WTC11 (cell line): ENCODE measurements at regions of chr11 and their contacts with region 1.

Region 1: DNA sequence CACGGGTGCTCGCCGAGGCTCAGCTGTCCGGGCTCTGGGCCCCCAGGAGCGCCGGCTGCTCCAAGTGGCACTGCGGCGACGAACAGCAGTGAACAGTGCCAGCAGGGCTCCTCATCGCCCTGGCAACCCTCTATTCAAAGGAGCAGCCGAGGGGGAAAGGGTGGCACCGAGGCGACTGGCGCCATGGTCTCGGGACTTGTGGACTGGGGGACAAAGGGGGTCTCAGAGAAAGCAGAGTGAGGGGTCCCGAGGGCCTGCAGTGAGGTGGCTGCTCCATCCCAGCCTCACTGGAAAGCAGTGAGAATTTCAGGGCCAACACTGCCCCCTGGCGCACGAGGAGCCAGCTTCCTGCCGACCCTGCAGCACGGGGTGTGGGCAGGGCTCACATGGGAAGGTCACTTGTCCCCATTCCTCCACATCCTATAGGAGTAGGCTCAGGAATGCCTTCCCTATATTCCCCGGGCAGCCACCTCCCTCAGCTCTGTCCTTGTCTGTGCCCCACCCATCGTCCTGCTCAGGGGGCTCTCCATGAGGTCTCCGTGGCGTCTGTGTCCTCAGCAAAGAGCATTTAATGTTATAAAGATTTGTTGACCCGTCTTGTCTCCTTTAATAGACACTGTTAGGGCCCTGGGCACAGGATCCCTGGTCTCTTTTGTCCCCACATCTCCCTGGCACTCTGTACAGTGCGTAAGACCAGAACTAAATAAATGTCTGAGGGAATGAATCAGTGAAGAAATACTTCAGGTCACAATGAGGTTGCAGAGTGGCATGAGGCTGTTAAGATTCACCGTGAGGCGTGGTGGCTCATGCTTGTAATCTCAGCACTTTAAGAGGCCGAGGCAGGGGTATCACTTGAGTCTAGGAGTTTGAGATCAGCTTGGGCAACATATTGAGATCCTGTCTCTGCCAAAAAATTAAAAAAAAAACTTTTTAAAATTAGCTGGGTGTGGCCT is 26.4 kb downstream of the LRFN4 start:
- DNase-seq: peak; percentile 91
- ATAC-seq: peak; percentile 91
- H3K4me3 Mint-ChIP-seq: no peak overlapping the region
- H3K27ac Mint-ChIP-seq: peak overlapping the region; percentile 91
- H3K4me1 Mint-ChIP-seq: peaks cover 41% of the 10 kb centered on the region
- H3K27me3 Mint-ChIP-seq: no peaks in the 10 kb centered on the region
- CTCF ChIP-seq: peak; percentile 54

Region 2: GRCh38 chr11:66126808-66127555 is 756.3 kb before region 1 on chr11:
- CTCF ChIA-PET with region 1: no interaction called
- POLR2A ChIA-PET with region 1: no interaction called
- DNase-seq: no peak
- ATAC-seq: peak; percentile 77
- H3K4me3 Mint-ChIP-seq: no peak overlapping the region
- H3K27ac Mint-ChIP-seq: peak overlapping the region; percentile 88
- H3K4me1 Mint-ChIP-seq: peaks cover 32% of the 10 kb centered on the region
- H3K27me3 Mint-ChIP-seq: no peaks in the 10 kb centered on the region
- CTCF ChIP-seq: no peak

Region 3: DNA sequence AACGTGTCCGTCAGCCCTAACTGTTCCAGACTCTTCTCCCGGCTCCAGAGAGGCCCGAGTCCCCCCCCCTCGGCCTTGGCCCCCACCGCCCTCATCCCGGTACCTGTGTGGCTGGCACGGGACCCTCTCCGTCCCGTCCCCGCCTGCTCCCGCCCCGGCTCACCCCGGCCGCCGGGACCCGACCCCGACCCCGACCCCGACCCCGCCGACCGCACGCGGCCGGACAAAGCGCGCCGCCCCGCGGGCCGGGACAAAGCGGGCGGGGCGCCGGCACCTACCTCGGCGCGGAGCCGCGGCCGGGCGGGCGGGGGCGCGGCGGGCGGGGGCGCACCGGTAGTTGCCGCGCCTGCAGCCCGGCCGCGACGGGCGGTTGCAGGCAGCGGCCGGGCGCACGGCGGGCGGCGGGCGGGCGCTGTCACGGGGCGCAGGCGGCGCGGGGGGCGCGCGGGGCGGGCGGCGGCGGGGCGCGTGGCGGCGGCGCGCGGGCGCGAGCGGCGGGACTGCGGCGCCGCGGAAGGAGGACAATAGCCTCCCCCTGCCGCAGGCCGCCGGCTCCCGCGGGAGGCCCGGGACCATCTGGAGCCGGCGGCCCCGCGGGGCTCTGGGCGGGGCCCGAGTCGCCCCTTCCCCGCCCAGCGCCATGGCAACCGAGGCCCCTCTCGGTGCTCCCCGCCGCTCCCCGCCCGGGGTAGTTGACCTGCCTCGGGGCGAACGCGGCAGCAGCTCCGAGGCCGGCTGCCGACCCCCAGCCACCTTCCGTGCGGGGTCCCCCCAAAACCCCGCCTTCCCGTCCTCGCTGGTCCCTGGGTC is 155.2 kb before region 1 on chr11:
- CTCF ChIA-PET with region 1: no interaction called
- POLR2A ChIA-PET with region 1: no interaction called
- DNase-seq: peak; percentile 45
- ATAC-seq: peak; percentile 47
- H3K4me3 Mint-ChIP-seq: peak overlapping the region; percentile 86
- H3K27ac Mint-ChIP-seq: no peak overlapping the region
- H3K4me1 Mint-ChIP-seq: peaks cover 27% of the 10 kb centered on the region
- H3K27me3 Mint-ChIP-seq: peaks cover 65% of the 10 kb centered on the region
- CTCF ChIP-seq: no peak

Region 4: DNA sequence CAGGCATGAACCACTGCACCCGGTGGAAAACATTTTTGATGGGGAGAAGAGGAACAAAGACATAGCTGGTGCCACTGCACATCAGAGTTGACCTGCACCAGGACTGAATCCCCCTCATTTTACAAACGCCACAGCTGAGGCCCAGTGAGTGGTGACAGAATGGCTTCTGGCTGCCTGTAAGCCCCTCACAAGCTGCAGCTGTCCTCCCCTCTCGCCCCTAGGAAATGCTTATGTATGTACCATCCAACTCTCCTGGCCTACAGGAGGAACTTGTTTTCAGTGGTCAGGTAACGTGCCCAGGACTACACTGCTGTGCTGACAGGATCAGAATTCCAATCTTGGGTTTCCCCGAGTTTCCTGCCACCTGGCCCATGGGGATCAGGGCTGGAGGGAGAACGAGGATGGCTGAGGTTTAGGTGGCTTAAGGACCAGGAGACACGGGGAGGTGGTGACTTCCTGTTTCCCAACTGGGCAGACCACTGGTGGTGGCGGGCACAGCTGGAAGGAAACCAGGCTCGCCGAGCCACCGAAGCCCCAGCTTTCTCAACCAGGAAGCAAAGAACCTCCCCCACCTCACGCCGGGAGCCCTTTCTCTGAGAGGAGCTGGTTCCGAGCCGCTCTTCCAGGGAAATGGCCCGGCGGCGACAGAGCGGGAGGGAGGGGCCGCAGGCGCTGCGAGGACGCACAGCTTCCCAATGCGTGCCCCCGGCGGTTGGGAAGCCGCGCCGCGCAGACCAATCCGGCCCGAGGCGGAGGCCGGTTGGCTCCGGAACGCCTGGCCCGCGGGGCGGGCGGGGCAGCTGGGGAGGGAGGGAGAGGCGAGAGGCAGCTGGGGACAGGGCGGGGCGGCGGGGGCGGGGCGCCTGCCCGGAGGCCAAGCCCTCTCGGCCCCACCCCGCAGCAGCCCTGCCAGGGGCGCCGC is 27.5 kb before region 1 on chr11:
- CTCF ChIA-PET with region 1: interaction called, 39 read pairs
- POLR2A ChIA-PET with region 1: interaction called, 5 read pairs
- DNase-seq: peak; percentile 97
- ATAC-seq: peak; percentile 74
- H3K4me3 Mint-ChIP-seq: peak overlapping the region; percentile 87
- H3K27ac Mint-ChIP-seq: peak overlapping the region; percentile 99
- H3K4me1 Mint-ChIP-seq: peaks cover 17% of the 10 kb centered on the region
- H3K27me3 Mint-ChIP-seq: no peaks in the 10 kb centered on the region
- CTCF ChIP-seq: no peak

Region 5: GRCh38 chr11:66868726-66869566 is 14.3 kb before region 1 on chr11:
- CTCF ChIA-PET with region 1: interaction called, 18 read pairs
- POLR2A ChIA-PET with region 1: no interaction called
- DNase-seq: peak; percentile 93
- ATAC-seq: peak; percentile 91
- H3K4me3 Mint-ChIP-seq: no peak overlapping the region
- H3K27ac Mint-ChIP-seq: peak overlapping the region; percentile 83
- H3K4me1 Mint-ChIP-seq: peaks cover 12% of the 10 kb centered on the region
- H3K27me3 Mint-ChIP-seq: no peaks in the 10 kb centered on the region
- CTCF ChIP-seq: peak; percentile 25; the same call in 1 of the 2 replicates

Region 6: DNA sequence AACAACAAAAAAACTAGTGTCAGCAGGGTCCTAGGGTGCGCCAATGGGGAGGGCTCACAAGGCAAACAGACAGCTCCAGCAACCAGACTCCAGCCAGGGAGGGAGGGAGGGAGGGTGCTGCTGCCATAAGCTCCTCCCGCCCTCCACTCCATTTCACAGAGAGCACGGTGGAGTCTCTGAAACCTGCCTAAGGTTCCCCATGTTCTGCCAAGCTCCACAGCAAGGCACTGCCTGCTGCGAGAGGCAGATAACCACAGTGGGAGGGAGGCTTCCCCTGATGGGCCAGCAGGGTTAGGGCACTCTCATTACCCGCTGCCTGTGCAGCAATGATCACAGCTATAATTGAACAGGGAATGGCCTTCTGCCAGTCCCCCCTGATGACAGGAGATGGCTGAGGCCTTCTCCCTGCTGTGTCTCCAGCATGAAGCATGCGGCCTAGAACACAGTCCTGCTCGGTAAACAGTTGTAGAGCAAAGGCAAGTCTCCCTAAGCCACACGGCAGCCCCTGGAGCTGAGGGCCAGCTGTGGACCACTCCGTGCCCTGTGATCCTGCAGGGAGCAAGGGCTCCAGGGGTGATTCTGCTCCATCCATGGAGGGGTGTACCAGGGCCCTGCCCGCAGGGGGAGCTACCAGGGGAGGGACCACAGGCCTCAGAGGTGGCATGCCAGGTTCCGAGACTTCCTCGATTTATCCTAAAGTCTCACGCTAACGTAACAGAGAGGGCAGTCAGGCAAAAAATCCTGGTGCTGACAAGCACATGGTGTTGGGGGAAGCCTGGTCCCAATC is 31.9 kb after region 1 on chr11:
- CTCF ChIA-PET with region 1: interaction called, 16 read pairs
- POLR2A ChIA-PET with region 1: interaction called, 3 read pairs
- DNase-seq: no peak
- ATAC-seq: peak; percentile 78
- H3K4me3 Mint-ChIP-seq: no peak overlapping the region
- H3K27ac Mint-ChIP-seq: no peak overlapping the region
- H3K4me1 Mint-ChIP-seq: peaks cover 40% of the 10 kb centered on the region
- H3K27me3 Mint-ChIP-seq: no peaks in the 10 kb centered on the region; the same call in 1 of the 2 replicates
- CTCF ChIP-seq: no peak

Region 7: GRCh38 chr11:66958232-66958955 is 75.1 kb after region 1 on chr11 and contains the start of gene PC:
- CTCF ChIA-PET with region 1: interaction called, 15 read pairs
- POLR2A ChIA-PET with region 1: no interaction called
- DNase-seq: peak; percentile 100
- ATAC-seq: peak; percentile 96
- H3K4me3 Mint-ChIP-seq: peak within 1 kb of the TSS; percentile 87
- H3K27ac Mint-ChIP-seq: peak within 1 kb of the TSS; percentile 99
- H3K4me1 Mint-ChIP-seq: peaks cover 26% of the 10 kb centered on the region
- H3K27me3 Mint-ChIP-seq: peaks cover 17% of the 10 kb centered on the region
- CTCF ChIP-seq: no peak
- total RNA-seq, gene PC: 22.1 to 27.2 TPM (median 25.6 TPM) in 3 replicates

Region 8: DNA sequence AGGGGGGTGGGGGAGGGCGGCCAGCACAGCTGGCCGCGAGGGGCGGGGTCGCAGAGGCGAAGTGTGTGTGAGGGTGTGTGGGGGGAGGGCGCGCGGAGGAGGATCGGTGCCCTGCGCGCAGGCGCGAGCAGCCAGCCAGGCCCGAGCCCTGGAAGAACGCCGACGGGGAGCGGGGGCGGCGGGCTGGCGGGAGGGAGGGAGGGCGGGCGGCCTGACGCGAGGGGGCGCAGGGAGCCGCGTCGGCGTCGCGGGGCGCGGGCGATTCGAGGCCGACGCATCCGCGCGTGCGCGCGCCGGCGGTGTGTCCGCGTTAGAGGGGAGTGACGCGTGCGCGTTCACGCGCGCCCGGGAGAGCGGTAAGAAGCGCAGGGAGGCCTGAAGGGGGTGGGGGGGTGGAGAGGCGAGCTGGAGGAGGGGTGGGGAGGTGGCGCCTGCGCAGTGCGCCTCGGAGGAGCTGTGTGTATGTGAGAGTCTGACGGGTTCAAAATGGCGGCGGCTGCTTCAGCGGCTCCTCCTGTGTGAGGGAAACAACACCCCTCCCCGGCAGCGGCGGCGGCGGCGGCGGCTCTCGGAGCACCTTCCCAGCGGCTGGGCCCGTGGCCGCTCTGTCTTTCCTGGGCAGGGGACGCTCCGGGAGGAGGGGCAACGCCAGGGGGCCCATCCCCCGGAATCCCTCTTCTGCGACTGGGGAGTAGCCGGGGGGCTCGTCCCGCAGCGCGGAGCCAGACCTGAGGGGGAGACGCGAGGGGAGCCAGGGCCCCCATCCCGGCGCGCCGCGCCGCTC is 235.7 kb after region 1 on chr11 and contains the start of gene KDM2A:
- CTCF ChIA-PET with region 1: no interaction called
- POLR2A ChIA-PET with region 1: no interaction called
- DNase-seq: peak; percentile 98
- ATAC-seq: peak; percentile 83
- H3K4me3 Mint-ChIP-seq: peak within 1 kb of the TSS; percentile 94
- H3K27ac Mint-ChIP-seq: peak within 1 kb of the TSS; percentile 96
- H3K4me1 Mint-ChIP-seq: peaks cover 32% of the 10 kb centered on the region
- H3K27me3 Mint-ChIP-seq: peaks cover 4% of the 10 kb centered on the region; the same call in 1 of the 2 replicates
- CTCF ChIP-seq: no peak
- total RNA-seq, gene KDM2A: 54.0 to 58.0 TPM (median 54.3 TPM) in 3 replicates

Region 9: GRCh38 chr11:67468835-67469811 is 585.8 kb after region 1 on chr11 and contains the start of gene TMEM134:
- CTCF ChIA-PET with region 1: no interaction called
- POLR2A ChIA-PET with region 1: no interaction called
- DNase-seq: peak; percentile 92
- ATAC-seq: peak; percentile 77
- H3K4me3 Mint-ChIP-seq: peak within 1 kb of the TSS; percentile 87
- H3K27ac Mint-ChIP-seq: 0 out of 2 replicates have a peak within 1 kb of the TSS, but pooled peaks have one; percentile 42
- H3K4me1 Mint-ChIP-seq: peaks cover 23% of the 10 kb centered on the region
- H3K27me3 Mint-ChIP-seq: peaks cover 13% of the 10 kb centered on the region
- CTCF ChIP-seq: no peak
- total RNA-seq, gene TMEM134: 55.6 to 61.1 TPM (median 59.6 TPM) in 3 replicates